ENCODE measurements at regions of chr19 and their contacts with region 1.

Region 1: DNA sequence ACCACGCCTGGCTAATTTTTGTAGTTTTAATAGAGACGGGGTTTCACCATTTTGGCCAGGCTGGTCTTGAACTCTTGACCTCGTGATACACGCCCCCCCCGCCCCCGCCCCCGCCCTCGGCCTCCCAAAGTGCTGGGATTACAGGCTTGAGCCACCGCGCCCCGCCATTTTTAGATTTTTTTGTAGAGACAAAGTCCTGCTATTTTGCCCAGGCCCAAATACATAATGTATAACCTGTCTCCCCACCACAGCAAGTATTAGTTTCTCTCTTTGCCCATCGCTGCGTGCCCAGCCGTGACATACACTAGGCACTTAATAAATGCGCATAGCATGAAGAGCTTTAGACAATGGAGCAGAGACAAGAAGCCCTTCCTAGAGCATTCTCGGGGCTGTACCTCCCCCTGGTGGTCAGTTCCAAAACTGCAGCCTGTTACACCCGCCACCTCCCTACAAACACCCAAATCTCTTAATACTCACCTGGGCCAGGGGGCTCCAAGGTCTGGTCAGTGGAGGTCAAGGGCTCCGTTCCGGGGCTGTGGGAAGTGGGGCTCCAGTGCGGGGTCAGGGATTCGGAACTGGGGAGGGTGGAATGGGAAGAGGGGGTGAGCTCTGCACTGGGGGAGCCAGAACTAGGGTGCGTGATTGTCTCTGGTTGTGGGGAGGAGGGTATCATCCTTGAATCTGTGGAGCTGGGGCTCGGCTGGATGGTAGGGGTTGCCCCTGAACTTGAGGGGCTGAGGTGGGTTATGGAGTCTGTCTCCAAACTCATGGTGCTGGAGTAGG is 22.5 kb downstream of the IQCN start:
- DNase-seq: no peak
- H3K4me3 ChIP-seq: no peak overlapping the region
- H3K27me3 ChIP-seq: peaks cover 5% of the 10 kb centered on the region
- CTCF ChIP-seq: peak; percentile 90

Region 2: GRCh38 chr19:18128044-18128443 is 123.7 kb before region 1 on chr19:
- CTCF ChIA-PET with region 1: no interaction called
- POLR2A ChIA-PET with region 1: no interaction called
- DNase-seq: no peak
- H3K4me3 ChIP-seq: no peak overlapping the region
- H3K27me3 ChIP-seq: no peaks in the 10 kb centered on the region
- CTCF ChIP-seq: no peak

Region 3: DNA sequence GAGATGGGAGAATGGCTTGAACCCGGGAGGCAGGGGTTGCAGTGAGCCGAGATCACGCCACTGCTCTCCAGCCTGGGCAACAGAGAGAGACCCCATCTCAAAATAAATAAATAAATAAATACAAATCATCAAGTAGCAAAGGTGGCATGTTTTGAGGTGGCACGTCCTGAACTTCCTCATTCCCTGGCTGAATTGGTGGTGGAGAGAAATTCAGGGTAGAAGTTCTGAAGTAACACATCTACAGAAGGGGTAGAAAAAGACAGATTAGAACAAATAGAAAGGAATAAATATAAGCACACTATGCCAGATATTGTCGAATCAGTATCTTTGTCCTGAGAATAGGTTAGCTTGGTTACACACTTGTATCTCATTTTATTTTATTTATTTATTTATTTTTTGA is 71.8 kb before region 1 on chr19:
- CTCF ChIA-PET with region 1: interaction called, 21 read pairs
- POLR2A ChIA-PET with region 1: no interaction called
- DNase-seq: no peak
- H3K4me3 ChIP-seq: no peak overlapping the region
- H3K27me3 ChIP-seq: no peaks in the 10 kb centered on the region
- CTCF ChIP-seq: no peak

Region 4: GRCh38 chr19:18192673-18193387 is 58.9 kb before region 1 on chr19 and contains the start of gene MPV17L2:
- CTCF ChIA-PET with region 1: interaction called, 109 read pairs
- POLR2A ChIA-PET with region 1: no interaction called
- DNase-seq: peak; percentile 100
- H3K4me3 ChIP-seq: peak within 1 kb of the TSS; percentile 87
- H3K27me3 ChIP-seq: no peaks in the 10 kb centered on the region
- CTCF ChIP-seq: no peak
- polyA plus RNA-seq, gene MPV17L2: 13.3 and 25.0 TPM in 2 replicates

Region 5: DNA sequence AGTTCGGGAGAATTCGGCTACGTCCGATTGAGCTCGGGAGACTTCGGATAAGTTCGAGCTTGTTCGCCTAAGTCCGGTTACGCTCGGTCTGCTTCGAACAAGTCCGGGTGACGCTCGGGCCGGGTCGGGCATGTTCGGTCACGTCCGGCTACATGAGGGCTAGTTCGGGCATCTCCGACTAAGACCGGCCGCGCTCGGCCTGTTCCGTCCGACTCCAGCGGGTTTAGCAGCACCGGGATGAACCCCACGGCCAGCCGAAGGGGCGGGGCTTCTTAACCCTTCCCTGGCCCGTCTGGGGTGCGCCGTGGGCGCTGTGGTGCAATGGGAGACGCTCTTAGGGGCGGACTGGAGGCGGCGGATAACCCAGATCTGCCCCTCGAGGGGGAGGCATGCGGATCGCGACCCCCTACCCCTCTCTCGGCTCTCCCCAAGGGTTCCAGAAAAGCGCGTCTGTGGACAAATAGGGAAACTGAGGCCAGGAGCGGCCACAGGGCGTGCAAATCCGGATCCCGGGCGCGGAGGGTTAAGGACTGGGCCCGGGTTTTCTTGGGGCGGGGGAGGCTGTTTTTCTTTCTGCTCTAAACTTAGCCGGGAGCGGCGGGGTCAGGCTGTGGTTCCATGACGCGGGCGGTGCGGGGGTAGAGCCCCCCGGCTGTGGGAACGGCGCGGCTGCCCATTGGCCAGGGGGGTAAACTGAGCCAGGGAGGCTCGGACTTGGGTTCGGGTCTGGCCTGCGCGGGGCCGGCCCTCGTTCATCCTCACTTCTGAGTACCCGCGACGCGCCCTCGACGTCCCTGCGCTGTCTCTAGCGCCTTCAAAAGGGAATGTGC is 27.0 kb before region 1 on chr19:
- CTCF ChIA-PET with region 1: interaction called, 12 read pairs
- POLR2A ChIA-PET with region 1: no interaction called
- DNase-seq: peak; percentile 88
- H3K4me3 ChIP-seq: peak overlapping the region; percentile 34
- H3K27me3 ChIP-seq: peaks cover 7% of the 10 kb centered on the region
- CTCF ChIP-seq: no peak

Region 6: DNA sequence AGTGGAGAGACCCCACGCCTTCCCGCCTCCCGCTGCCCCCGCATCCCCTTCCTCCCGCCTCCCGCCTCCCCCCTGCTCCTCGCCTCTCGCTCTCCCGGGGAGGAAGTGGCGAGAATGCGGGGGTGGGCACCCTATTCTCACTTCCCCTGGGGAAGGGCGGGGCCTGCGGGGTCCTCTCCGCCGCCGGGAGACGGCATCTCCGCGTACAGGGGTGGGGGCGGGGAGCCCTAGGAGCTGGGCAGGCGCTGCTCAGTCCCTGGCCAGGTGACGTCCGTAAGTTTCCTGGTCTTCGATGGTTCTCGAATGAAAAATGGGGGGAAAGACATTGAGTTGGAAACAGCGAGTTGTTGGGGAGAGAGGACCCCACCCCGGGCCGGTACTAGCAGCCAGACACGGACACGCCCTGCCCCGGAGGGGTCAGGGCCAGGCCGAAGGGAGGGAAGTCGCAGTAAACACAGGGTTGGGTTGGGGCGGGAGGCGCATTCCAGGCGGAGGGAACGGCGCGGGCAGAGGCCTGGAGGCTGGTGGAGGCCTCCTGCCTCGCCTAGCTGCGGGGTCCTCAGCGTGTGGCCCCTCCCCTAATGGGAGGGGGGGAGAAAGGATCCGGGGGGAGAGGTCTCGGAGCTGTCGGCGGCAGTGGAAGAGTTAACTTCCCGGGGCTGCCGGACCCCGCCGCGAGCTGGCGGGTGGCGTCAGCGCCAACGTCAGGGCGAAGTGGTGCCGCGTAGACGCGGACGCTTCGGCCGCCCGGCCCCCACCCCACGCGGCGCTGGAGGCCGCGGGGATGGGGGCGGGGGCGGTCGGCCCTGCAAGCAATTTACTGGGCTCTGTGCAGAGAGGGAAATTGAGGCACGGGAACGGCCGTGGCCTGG is 40.0 kb after region 1 on chr19:
- CTCF ChIA-PET with region 1: no interaction called
- POLR2A ChIA-PET with region 1: no interaction called
- DNase-seq: no peak
- H3K4me3 ChIP-seq: peak overlapping the region; percentile 63
- H3K27me3 ChIP-seq: no peaks in the 10 kb centered on the region
- CTCF ChIP-seq: no peak

Region 7: DNA sequence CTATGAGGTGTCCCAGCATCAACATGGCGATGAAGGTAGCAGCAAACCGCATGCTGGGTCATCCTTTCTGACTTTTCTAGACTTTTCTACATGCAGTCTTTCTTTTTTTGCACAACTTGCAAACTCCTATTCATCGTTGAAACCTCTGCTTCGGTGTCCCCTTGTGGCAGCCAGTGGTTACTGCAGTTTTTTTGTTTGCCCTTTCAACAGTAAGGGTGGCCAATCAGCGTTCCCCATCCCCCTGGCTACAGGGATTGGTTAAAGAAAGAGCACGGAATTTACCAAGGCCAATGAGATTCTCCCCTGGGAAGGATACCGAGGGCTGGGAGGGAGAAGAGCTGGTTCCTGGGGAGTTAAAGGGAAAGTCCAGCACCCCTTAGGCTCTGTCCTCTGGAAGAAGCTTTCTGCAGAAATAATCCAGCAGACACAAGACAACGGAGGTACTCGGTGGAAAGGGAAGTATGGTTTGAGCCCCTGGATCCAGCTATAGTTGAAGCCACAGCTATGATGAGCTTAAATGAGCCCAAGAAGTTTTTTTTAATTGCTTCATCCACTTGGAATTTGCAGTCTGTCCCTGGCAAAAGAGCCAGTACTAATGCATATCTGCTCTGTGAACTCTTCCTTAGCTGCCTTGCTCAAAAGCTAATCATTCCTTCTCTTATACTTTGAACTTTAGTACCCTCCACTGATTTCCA is 76.7 kb after region 1 on chr19:
- CTCF ChIA-PET with region 1: interaction called, 10 read pairs
- POLR2A ChIA-PET with region 1: no interaction called
- DNase-seq: peak; percentile 89
- H3K4me3 ChIP-seq: peak overlapping the region; percentile 18
- H3K27me3 ChIP-seq: no peaks in the 10 kb centered on the region
- CTCF ChIP-seq: peak; percentile 94

Region 8: GRCh38 chr19:18436671-18437490 is 185.1 kb after region 1 on chr19:
- CTCF ChIA-PET with region 1: no interaction called
- POLR2A ChIA-PET with region 1: no interaction called
- DNase-seq: no peak
- H3K4me3 ChIP-seq: peak overlapping the region; percentile 65
- H3K27me3 ChIP-seq: no peaks in the 10 kb centered on the region
- CTCF ChIP-seq: peak; percentile 21; the same call in 1 of the 2 replicates

Measured in BJ (cell line).